Naive thymus-derived CD8-positive, alpha-beta T cell (primary cell): ENCODE measurements at regions of chr14 and their contacts with region 1.

Region 1: GRCh38 chr14:100078991-100079725 is 13.9 kb downstream of the EVL start:
- DNase-seq: peak; percentile 77 to 94 (median 88)
- ATAC-seq: peak; percentile 75 to 83
- H3K4me3 Mint-ChIP-seq: peak overlapping the region; percentile 51 to 95 (median 83)
- H3K27ac Mint-ChIP-seq: peak overlapping the region; percentile 91 to 100 (median 98)
- H3K4me1 Mint-ChIP-seq: peaks cover 59 to 99% (median 96%) of the 10 kb centered on the region in 4 donors
- H3K27me3 Mint-ChIP-seq: no peaks in the 10 kb centered on the region

Region 2: GRCh38 chr14:100108042-100108825 is 29.1 kb after region 1 on chr14:
- POLR2A ChIA-PET with region 1: interaction called, 2,215 read pairs
- DNase-seq: peak; percentile 80 to 93 (median 88)
- ATAC-seq: peak; percentile 64 to 69
- H3K4me3 Mint-ChIP-seq: peak overlapping the region in 9 of 10 donors; percentile 50 to 83 (median 74)
- H3K27ac Mint-ChIP-seq: peak overlapping the region; percentile 94 to 98 (median 96)
- H3K4me1 Mint-ChIP-seq: peaks cover 68 to 90% (median 86%) of the 10 kb centered on the region in 4 donors
- H3K27me3 Mint-ChIP-seq: no peaks in the 10 kb centered on the region